ENCODE measurements at regions of chr9 and their contacts with region 1.

Region 1: DNA sequence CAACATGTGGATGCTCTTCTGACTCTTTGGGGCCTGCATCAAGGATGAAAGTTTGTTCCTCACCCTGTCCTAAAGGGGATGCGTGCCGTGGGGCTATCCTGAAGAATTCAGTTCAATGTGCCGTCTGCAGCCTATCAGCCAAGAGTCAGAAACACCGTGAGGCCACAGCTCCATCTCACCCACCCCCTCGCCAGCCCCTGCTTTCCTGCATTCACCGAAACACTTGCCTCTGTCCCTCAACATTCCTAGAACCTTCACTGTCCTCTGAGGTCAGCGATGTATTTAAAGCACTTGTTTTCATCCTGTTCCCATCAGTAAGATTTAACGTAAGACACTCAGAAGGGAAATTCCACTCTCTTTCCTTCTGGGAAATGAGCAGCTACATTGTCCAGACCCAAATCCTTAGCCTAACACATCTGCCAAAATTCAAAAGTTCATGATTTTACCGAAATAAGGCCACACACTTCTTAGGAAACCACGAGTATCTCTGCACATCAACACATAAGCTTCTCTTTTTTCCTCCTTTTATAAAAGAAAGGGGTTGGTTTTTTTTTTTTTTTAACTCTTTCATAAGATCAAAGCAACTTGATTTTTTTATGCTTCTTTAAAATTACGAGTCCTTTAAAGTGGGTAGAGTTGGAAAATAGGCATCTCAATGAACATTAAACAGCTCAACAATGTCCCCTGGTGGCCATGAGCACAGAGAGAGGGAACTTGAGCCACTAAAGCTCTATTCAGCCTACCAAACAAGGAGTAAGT is 100.7 kb downstream of the SUSD1 start:
- DNase-seq: peak in 3 of 4 donors; percentile 60 to 79 (median 61)
- ATAC-seq: peak; percentile 93
- H3K4me3 ChIP-seq: no peak overlapping the region
- H3K27ac ChIP-seq: peak overlapping the region; percentile 74 to 76
- H3K4me1 ChIP-seq: peaks cover 17 to 57% of the 10 kb centered on the region in 2 donors
- H3K27me3 ChIP-seq: no peaks in the 10 kb centered on the region
- CTCF ChIP-seq: peak; percentile 70 to 89

Region 2: DNA sequence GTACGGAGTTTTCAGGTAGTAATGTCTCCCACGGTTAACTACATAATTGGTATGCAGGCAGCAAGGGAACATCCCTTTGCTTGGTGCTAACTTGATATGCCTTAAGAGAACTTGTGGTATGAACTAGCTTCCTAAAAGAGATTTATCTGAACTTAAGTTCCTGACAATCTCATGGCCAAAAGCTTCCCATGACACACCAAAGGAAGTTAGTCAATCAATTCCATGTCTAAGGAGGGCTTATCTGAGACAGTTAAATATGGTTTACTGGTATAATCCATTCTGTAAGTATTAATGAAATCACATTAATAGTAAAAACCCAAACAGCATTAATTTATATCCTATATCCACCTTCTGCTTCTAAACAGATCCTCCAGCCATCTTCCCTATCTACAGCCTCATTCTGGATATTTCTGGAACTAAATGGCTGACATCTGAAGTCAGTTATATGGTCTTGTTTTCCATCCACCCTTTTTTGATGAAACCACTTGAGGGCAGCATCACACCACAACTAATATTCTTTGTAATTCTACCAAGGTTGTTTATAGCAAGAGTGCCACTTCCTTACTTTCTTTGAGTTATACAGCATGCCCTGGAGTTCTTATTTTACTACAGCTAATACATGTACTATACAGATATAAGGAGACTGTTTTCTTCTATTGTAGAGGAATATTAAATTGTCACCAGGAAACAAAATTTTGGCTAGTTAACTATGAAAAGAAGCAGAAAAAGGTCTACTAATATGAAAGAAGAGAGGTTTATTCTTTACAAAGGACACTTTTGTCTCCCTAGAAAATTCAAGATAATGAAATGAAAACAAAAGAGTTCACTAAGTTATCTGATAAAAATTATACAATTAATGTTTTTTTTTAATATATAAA is 314.4 kb before region 1 on chr9:
- intact Hi-C with region 1: loop called in 1 of 2 experiments (anchors 5 kb)
- DNase-seq: peak in 2 of 4 donors; percentile 66 to 84
- ATAC-seq: peak; percentile 97
- H3K4me3 ChIP-seq: no peak overlapping the region
- H3K27ac ChIP-seq: no peak overlapping the region
- H3K4me1 ChIP-seq: peaks cover 0 to 10% of the 10 kb centered on the region in 2 donors
- H3K27me3 ChIP-seq: no peaks in the 10 kb centered on the region
- CTCF ChIP-seq: peak; percentile 60 to 61

Region 3: GRCh38 chr9:112020680-112021596 is 53.5 kb before region 1 on chr9:
- intact Hi-C with region 1: no loop called
- DNase-seq: no peak
- ATAC-seq: peak; percentile 47
- H3K4me3 ChIP-seq: no peak overlapping the region
- H3K27ac ChIP-seq: no peak overlapping the region
- H3K4me1 ChIP-seq: peaks cover 0 to 9% of the 10 kb centered on the region in 2 donors
- H3K27me3 ChIP-seq: no peaks in the 10 kb centered on the region
- CTCF ChIP-seq: no peak

Region 4: DNA sequence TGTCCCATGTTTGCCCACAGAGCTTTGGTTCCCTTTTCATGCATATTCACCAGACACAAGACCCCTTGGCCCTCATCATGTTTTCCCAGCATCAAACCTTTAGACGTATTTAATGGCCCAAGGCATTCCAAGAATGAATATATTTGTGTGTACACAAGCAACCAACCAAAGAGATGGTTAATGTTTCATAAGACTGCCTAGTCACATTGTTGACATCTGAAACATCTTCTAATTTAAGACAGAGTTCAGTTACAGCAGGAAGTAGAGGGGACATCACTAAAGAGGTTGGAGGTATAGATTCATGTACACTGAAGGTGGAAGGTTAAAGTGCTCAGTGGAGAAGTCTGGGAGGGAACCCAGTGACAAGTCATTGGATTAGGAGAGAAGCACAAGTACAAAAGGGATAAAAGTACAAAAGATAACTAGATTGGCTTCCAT is 51.5 kb after region 1 on chr9:
- intact Hi-C with region 1: no loop called
- DNase-seq: no peak
- ATAC-seq: no peak
- H3K4me3 ChIP-seq: no peak overlapping the region
- H3K27ac ChIP-seq: no peak overlapping the region
- H3K4me1 ChIP-seq: no peaks in the 10 kb centered on the region
- H3K27me3 ChIP-seq: no peaks in the 10 kb centered on the region
- CTCF ChIP-seq: no peak

Region 5: DNA sequence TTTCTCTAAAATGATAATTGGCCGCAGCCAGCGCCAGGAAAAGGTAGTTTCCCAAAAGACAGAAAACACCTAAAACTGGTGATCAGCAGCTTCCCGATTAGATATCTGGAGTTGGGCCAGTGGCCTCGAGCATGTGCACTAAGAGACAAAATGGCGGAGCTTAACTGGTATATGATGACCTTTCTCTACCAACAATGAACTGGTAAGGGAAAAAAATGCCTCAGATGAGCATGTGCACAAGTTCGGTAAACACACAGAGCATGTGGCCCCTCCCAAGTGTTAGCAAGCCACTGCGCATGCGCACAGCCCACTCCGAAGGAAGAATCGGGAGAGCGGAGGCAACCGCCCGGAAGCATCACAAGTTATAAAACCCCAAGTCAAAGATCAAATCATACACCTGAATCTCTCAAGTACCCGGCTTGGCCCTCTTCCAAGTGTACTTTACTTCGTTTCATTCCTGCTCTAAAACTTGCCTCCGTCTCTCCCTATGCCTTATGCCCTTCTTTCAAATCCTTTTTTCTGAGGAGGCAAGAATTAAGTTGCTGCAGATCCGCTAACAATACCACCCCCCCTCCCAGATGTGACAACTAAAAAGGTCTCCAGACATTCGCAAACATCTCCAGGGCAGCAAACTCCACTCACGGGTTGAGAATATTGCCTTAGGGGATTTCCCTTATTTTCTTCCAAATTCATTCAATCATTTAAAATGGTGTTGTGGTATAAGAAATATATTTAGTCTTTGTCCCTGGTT is 274.0 kb after region 1 on chr9:
- intact Hi-C with region 1: no loop called
- DNase-seq: peak; percentile 51 to 95 (median 88)
- ATAC-seq: peak; percentile 88
- H3K4me3 ChIP-seq: peak overlapping the region; percentile 29 to 43
- H3K27ac ChIP-seq: no peak overlapping the region
- H3K4me1 ChIP-seq: peaks cover 0 to 10% of the 10 kb centered on the region in 2 donors
- H3K27me3 ChIP-seq: no peaks in the 10 kb centered on the region
- CTCF ChIP-seq: no peak